ENCODE measurements at regions of chr2 and their contacts with region 1.

Region 1: GRCh38 chr2:117997872-117998454 is 15.9 kb downstream of the CCDC93 start:
- DNase-seq: no peak
- ATAC-seq: peak in 5 of 8 donors; percentile 27 to 78 (median 49)
- H3K4me3 ChIP-seq: no peak overlapping the region
- H3K27ac ChIP-seq: peak overlapping the region in 1 of 10 donors; percentile 24
- H3K4me1 ChIP-seq: peaks cover 0 to 23% (median 12%) of the 10 kb centered on the region in 9 donors
- H3K27me3 ChIP-seq: no peaks in the 10 kb centered on the region
- CTCF ChIP-seq: no peak

Region 2: GRCh38 chr2:117943013-117943672 is 54.8 kb before region 1 on chr2:
- intact Hi-C with region 1: loop called in 1 of 10 experiments (anchors 10 kb)
- DNase-seq: no peak
- ATAC-seq: no peak
- H3K4me3 ChIP-seq: no peak overlapping the region
- H3K27ac ChIP-seq: no peak overlapping the region
- H3K4me1 ChIP-seq: peaks cover 0 to 13% (median 0%) of the 10 kb centered on the region in 9 donors
- H3K27me3 ChIP-seq: no peaks in the 10 kb centered on the region
- CTCF ChIP-seq: no peak

Region 3: GRCh38 chr2:118122594-118123281 is 124.8 kb after region 1 on chr2:
- intact Hi-C with region 1: no loop called
- DNase-seq: no peak
- ATAC-seq: peak in 1 of 8 donors; percentile 38
- H3K4me3 ChIP-seq: no peak overlapping the region
- H3K27ac ChIP-seq: peak overlapping the region in 5 of 10 donors; percentile 6 to 69 (median 27)
- H3K4me1 ChIP-seq: peaks cover 0 to 32% (median 8%) of the 10 kb centered on the region in 9 donors
- H3K27me3 ChIP-seq: no peaks in the 10 kb centered on the region
- CTCF ChIP-seq: no peak